ENCODE measurements at regions of chr2 and their contacts with region 1.

Region 1: GRCh38 chr2:161586517-161587167 is 37.6 kb upstream of the SLC4A10 start:
- DNase-seq: peak; percentile 25
- ATAC-seq: peak; percentile 72
- H3K4me3 ChIP-seq: no peak overlapping the region
- H3K27ac ChIP-seq: no peak overlapping the region
- H3K4me1 ChIP-seq: no peaks in the 10 kb centered on the region
- H3K27me3 ChIP-seq: no peaks in the 10 kb centered on the region
- CTCF ChIP-seq: peak; percentile 69
- POLR2A ChIP-seq: no peak
- RAD21 ChIP-seq: peak; percentile 76

Region 2: DNA sequence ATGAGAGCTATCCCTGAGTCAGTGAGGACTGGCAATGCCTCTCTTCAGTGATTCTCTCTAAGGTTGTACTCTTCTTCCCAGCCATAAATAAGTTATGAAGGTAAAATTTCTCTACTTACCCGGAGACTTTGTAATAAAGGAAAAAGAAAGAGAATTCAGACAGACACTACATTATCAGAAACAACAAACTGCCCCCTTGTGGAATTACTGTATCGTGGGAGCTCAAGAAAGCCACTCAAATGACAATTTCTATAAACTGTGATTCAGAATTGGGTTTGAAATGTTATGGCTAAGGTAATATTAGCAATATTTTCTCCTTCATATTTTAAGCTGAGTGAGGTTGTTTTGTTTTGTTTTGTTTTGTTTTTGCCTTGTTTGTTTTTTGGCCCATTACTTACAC is 582.3 kb before region 1 on chr2:
- CTCF ChIA-PET with region 1: no interaction called
- POLR2A ChIA-PET with region 1: no interaction called
- dilution Hi-C with region 1: no loop called
- in situ Hi-C with region 1: no loop called
- intact Hi-C with region 1: no loop called
- DNase-seq: peak; percentile 20
- ATAC-seq: peak; percentile 46; the same call in 1 of the 2 replicates
- H3K4me3 ChIP-seq: no peak overlapping the region
- H3K27ac ChIP-seq: no peak overlapping the region
- H3K4me1 ChIP-seq: peaks cover 2% of the 10 kb centered on the region; the same call in 1 of the 2 replicates
- H3K27me3 ChIP-seq: no peaks in the 10 kb centered on the region
- CTCF ChIP-seq: peak; percentile 53
- POLR2A ChIP-seq: no peak
- RAD21 ChIP-seq: peak; percentile 39

Region 3: DNA sequence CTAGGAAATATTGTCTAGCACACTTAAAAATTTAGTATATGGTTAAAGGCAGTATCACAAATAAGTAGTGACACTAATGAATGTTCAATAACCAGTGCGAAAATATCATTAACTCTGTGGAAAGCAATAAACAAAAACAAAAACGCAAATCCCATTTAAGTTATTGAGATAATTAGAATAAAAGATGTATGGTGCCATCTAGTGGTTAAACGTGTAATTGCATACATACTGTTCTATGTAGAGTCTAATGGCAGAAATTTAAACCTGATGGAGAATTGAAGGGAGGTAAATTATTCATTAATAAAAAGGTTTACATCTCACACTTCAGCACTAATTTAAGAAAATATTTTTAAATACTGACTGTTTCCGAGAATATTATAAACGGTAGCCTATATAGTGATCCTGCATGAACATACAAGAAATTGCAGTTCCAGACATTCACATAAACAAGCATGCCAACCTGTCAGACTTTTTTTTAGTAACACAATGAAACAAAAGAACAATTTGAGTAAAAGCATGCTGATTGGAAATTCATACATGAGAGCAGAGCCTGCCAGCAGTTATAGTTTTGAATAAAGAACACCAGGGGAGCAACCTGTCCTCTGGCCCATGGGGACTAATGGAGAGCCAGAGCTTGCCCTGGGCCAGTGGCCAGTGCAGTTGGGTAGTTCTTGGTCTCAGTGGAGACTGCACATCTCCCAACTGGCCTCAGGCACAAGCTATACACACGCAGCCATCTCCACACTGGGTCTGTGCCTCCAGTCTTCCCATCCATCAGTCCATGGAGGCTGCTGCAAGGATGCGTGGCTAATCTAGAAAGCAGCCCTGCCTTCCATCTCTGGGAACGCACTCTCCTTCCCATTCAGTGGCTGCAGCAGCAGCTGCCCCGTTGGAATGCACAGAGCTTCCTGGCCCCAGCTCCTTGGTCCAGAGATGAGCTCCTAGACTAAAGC is 537.4 kb after region 1 on chr2:
- CTCF ChIA-PET with region 1: interaction called, 21 read pairs
- POLR2A ChIA-PET with region 1: no interaction called
- dilution Hi-C with region 1: no loop called
- in situ Hi-C with region 1: loop called (anchors 5 kb)
- intact Hi-C with region 1: loop called (anchors 1 kb)
- DNase-seq: peak; percentile 63
- ATAC-seq: peak; percentile 63; the same call in 1 of the 2 replicates
- H3K4me3 ChIP-seq: no peak overlapping the region
- H3K27ac ChIP-seq: no peak overlapping the region
- H3K4me1 ChIP-seq: peaks cover 5% of the 10 kb centered on the region; the same call in 1 of the 2 replicates
- H3K27me3 ChIP-seq: peaks cover 2% of the 10 kb centered on the region; the same call in 1 of the 2 replicates
- CTCF ChIP-seq: peak; percentile 77
- POLR2A ChIP-seq: no peak
- RAD21 ChIP-seq: peak; percentile 77

Region 4: DNA sequence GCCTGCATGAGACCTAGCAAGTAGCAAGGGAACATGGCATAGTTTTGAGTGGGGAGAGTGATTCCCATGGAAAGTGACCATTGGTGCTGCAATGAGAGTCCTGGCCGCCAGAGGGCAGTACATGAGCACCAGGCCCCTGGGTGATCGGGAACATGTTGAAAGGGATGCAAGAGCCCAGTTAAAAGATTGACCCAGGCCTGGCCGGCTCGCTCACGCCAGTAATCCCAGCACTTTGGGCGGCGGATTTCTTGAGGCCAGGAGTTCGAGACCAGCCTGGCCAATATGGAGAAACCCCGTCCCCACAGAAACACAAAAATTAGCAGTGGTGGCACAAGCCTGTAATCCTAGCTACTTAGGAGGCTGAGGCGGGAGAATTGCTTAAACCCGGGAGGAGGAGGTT is 634.4 kb after region 1 on chr2:
- CTCF ChIA-PET with region 1: no interaction called
- POLR2A ChIA-PET with region 1: no interaction called
- dilution Hi-C with region 1: no loop called
- in situ Hi-C with region 1: no loop called
- intact Hi-C with region 1: loop called (anchors 5 kb)
- DNase-seq: peak; percentile 55
- ATAC-seq: peak; percentile 78
- H3K4me3 ChIP-seq: no peak overlapping the region
- H3K27ac ChIP-seq: no peak overlapping the region
- H3K4me1 ChIP-seq: no peaks in the 10 kb centered on the region
- H3K27me3 ChIP-seq: no peaks in the 10 kb centered on the region
- CTCF ChIP-seq: peak; percentile 82
- POLR2A ChIP-seq: no peak
- RAD21 ChIP-seq: peak; percentile 92

Region 5: GRCh38 chr2:162301151-162301804 is 714.6 kb after region 1 on chr2:
- CTCF ChIA-PET with region 1: interaction called, 3 read pairs
- POLR2A ChIA-PET with region 1: no interaction called
- dilution Hi-C with region 1: no loop called
- in situ Hi-C with region 1: loop called (anchors 10 kb)
- intact Hi-C with region 1: loop called (anchors 1 kb)
- DNase-seq: peak; percentile 75
- ATAC-seq: peak; percentile 82
- H3K4me3 ChIP-seq: no peak overlapping the region
- H3K27ac ChIP-seq: no peak overlapping the region
- H3K4me1 ChIP-seq: no peaks in the 10 kb centered on the region
- H3K27me3 ChIP-seq: no peaks in the 10 kb centered on the region
- CTCF ChIP-seq: peak; percentile 86
- POLR2A ChIP-seq: no peak
- RAD21 ChIP-seq: peak; percentile 73

Region 6: GRCh38 chr2:162333968-162334367 is 747.3 kb after region 1 on chr2:
- CTCF ChIA-PET with region 1: interaction called, 3 read pairs
- POLR2A ChIA-PET with region 1: no interaction called
- dilution Hi-C with region 1: no loop called
- in situ Hi-C with region 1: no loop called
- intact Hi-C with region 1: loop called (anchors 1 kb)
- DNase-seq: peak; percentile 33
- ATAC-seq: peak; percentile 73
- H3K4me3 ChIP-seq: no peak overlapping the region
- H3K27ac ChIP-seq: no peak overlapping the region
- H3K4me1 ChIP-seq: no peaks in the 10 kb centered on the region
- H3K27me3 ChIP-seq: peaks cover 2% of the 10 kb centered on the region; the same call in 1 of the 2 replicates
- CTCF ChIP-seq: peak; percentile 40; the same call in 1 of the 2 replicates
- POLR2A ChIP-seq: no peak
- RAD21 ChIP-seq: peak; percentile 30

Region 7: GRCh38 chr2:163132850-163133249 is 1546.2 kb after region 1 on chr2:
- CTCF ChIA-PET with region 1: no interaction called
- POLR2A ChIA-PET with region 1: no interaction called
- dilution Hi-C with region 1: no loop called
- in situ Hi-C with region 1: no loop called
- intact Hi-C with region 1: loop called (anchors 10 kb)
- DNase-seq: peak; percentile 2
- ATAC-seq: no peak
- H3K4me3 ChIP-seq: no peak overlapping the region
- H3K27ac ChIP-seq: no peak overlapping the region
- H3K4me1 ChIP-seq: no peaks in the 10 kb centered on the region
- H3K27me3 ChIP-seq: no peaks in the 10 kb centered on the region
- CTCF ChIP-seq: peak; percentile 56
- POLR2A ChIP-seq: no peak
- RAD21 ChIP-seq: peak; percentile 42